ENCODE measurements at regions of chr2 and their contacts with region 1.

Region 1: DNA sequence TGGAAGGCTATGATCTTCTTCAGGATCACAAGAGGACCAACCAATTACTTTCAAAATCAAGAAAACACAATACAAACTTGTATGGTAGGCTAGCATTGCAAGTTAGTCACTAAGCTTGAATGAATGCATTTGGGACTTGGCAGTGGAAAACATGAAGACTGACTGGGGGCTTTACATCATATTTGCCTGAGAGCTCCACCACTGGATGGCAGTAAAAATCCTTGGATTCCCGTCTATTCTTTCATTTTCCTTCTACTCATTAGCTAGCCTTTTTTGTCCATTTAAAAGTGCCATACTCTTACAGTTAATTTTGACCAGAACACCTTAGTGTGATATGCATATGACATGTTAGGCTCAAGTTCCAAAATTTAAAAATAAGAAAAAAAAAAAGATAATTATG is 63.5 kb upstream of the RASGRP3 start:
- DNase-seq: peak; percentile 55 to 85
- ATAC-seq: peak; percentile 54 to 56; a peak in 4 of 6 replicates
- H3K4me3 ChIP-seq: no peak overlapping the region
- H3K27ac ChIP-seq: peak overlapping the region; percentile 79 to 82
- H3K4me1 ChIP-seq: peaks cover 21% of the 10 kb centered on the region
- CTCF ChIP-seq: peak; percentile 75
- EP300 ChIP-seq: no peak
- POLR2A ChIP-seq: no peak
- RAD21 ChIP-seq: peak; percentile 79 to 83

Region 2: DNA sequence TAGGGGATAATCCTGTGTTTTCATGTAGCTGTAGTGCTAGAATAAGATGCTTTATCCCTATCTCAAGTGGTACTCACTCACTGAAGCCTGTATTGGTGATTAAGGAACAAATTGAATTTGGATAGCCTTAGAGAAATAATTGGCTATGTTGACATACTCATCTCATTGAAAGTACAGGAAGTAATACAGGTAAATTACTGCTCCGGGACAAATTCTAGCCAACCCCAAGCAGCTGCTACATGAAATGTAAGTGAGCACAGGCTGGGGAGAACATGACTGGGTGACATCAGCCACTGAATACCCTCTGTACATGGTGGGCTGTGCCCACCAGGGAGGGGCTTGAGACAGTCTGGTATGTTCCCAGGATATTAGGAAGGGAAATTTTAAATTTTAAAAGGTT is 124.9 kb before region 1 on chr2:
- CTCF ChIA-PET with region 1: no interaction called
- POLR2A ChIA-PET with region 1: no interaction called
- DNase-seq: no peak
- ATAC-seq: no peak
- H3K4me3 ChIP-seq: no peak overlapping the region
- H3K27ac ChIP-seq: no peak overlapping the region
- H3K4me1 ChIP-seq: peaks cover 28% of the 10 kb centered on the region
- CTCF ChIP-seq: no peak
- EP300 ChIP-seq: no peak
- POLR2A ChIP-seq: no peak
- RAD21 ChIP-seq: no peak

Region 3: GRCh38 chr2:33433279-33434235 is 20.6 kb after region 1 on chr2:
- CTCF ChIA-PET with region 1: interaction called, 11 read pairs
- POLR2A ChIA-PET with region 1: interaction called, 3 read pairs
- DNase-seq: no peak
- ATAC-seq: no peak
- H3K4me3 ChIP-seq: no peak overlapping the region
- H3K27ac ChIP-seq: no peak overlapping the region
- H3K4me1 ChIP-seq: peaks cover 13% of the 10 kb centered on the region
- CTCF ChIP-seq: no peak
- EP300 ChIP-seq: no peak
- POLR2A ChIP-seq: no peak
- RAD21 ChIP-seq: no peak

Region 4: DNA sequence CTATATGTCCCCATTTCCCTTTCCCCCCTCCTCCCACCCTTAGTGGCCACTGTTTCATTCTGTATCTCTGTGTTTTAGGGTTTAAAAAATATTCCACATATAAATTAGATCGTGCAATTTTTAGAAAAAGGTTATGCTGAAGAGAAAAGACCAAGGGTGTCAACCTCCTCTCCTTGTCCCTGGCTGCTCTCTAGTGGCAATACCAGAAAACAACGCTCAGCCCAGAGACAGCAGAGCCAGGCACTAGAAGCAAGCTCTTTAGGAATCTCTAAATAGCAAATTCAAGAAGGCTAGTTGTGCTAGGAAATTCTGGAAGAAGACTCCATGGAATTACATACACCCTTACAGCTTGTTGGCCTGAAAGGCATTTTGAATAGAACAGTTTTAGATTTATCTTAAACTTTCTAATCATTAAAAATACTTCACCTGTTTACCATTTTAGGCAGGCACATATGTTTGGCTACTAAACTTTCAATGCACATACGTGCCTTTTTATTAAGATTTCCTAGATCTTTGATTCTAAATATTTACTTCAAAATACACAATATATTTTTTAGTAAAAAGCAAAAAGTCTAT is 28.4 kb after region 1 on chr2:
- CTCF ChIA-PET with region 1: interaction called, 20 read pairs
- POLR2A ChIA-PET with region 1: interaction called, 3 read pairs
- DNase-seq: peak; percentile 59 to 80
- ATAC-seq: peak; percentile 98
- H3K4me3 ChIP-seq: no peak overlapping the region
- H3K27ac ChIP-seq: peak overlapping the region in 1 of 2 experiments; percentile 10; a peak in 1 of 6 replicates
- H3K4me1 ChIP-seq: no peaks in the 10 kb centered on the region; the same call in 2 of the 3 replicates
- CTCF ChIP-seq: peak; percentile 93
- EP300 ChIP-seq: no peak
- POLR2A ChIP-seq: no peak
- RAD21 ChIP-seq: peak; percentile 95 to 98

Region 5: DNA sequence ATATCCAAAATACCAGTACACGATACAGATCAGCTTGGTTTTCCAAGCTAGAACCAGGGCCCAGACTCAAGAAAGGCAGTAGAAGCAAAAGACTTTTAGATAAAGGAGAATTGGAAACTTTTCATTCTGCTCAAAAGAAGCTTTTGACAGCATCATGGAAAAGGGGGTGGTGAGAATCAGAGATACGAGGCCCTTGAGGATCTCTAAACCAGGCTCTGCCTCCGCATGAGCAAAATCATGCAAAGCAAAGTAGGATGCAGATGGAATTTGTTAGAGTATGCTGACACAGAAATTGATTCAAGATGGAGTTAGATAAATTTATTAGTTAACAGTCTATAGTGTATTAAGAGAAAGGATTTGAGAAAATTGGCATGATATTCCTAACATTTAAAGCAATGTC is 146.4 kb after region 1 on chr2:
- CTCF ChIA-PET with region 1: no interaction called
- POLR2A ChIA-PET with region 1: no interaction called
- DNase-seq: no peak
- ATAC-seq: no peak
- H3K4me3 ChIP-seq: no peak overlapping the region
- H3K27ac ChIP-seq: no peak overlapping the region
- H3K4me1 ChIP-seq: no peaks in the 10 kb centered on the region
- CTCF ChIP-seq: no peak
- EP300 ChIP-seq: no peak
- POLR2A ChIP-seq: no peak
- RAD21 ChIP-seq: no peak

Region 6: GRCh38 chr2:33583194-33583938 is 170.4 kb after region 1 on chr2:
- CTCF ChIA-PET with region 1: interaction called, 12 read pairs
- POLR2A ChIA-PET with region 1: no interaction called
- DNase-seq: peak in 1 of 2 experiments; percentile 46
- ATAC-seq: peak in 1 of 2 experiments; percentile 62; a peak in 3 of 6 replicates
- H3K4me3 ChIP-seq: no peak overlapping the region
- H3K27ac ChIP-seq: no peak overlapping the region
- H3K4me1 ChIP-seq: no peaks in the 10 kb centered on the region
- CTCF ChIP-seq: peak; percentile 99
- EP300 ChIP-seq: no peak
- POLR2A ChIP-seq: no peak
- RAD21 ChIP-seq: peak; percentile 93 to 96

Measured in A549 (cell line).